Calu3 (cell line): ENCODE measurements at regions of chr3 and their contacts with region 1.

Region 1: GRCh38 chr3:19348929-19349564 is 200.7 kb downstream of the KCNH8 start:
- DNase-seq: peak; percentile 19
- H3K4me3 Mint-ChIP-seq: no peak overlapping the region
- H3K27ac Mint-ChIP-seq: no peak overlapping the region
- H3K4me1 Mint-ChIP-seq: no peaks in the 10 kb centered on the region
- H3K27me3 Mint-ChIP-seq: no peaks in the 10 kb centered on the region
- CTCF ChIP-seq: peak; percentile 56

Region 2: GRCh38 chr3:19399356-19399755 is 50.3 kb after region 1 on chr3:
- CTCF ChIA-PET with region 1: no interaction called
- intact Hi-C with region 1: no loop called
- DNase-seq: no peak
- H3K4me3 Mint-ChIP-seq: no peak overlapping the region
- H3K27ac Mint-ChIP-seq: no peak overlapping the region
- H3K4me1 Mint-ChIP-seq: no peaks in the 10 kb centered on the region
- H3K27me3 Mint-ChIP-seq: no peaks in the 10 kb centered on the region
- CTCF ChIP-seq: no peak

Region 3: GRCh38 chr3:19543212-19543841 is 194.3 kb after region 1 on chr3:
- CTCF ChIA-PET with region 1: interaction called, 3 read pairs
- intact Hi-C with region 1: loop called (anchors 1 kb)
- DNase-seq: peak; percentile 5
- H3K4me3 Mint-ChIP-seq: no peak overlapping the region
- H3K27ac Mint-ChIP-seq: no peak overlapping the region
- H3K4me1 Mint-ChIP-seq: peaks cover 11% of the 10 kb centered on the region
- H3K27me3 Mint-ChIP-seq: peaks cover 8% of the 10 kb centered on the region
- CTCF ChIP-seq: peak; percentile 51